ENCODE measurements at regions of chr2 and their contacts with region 1.

Region 1: GRCh38 chr2:54915101-54915500 is 135.2 kb downstream of the RTN4 start:
- DNase-seq: no peak
- ATAC-seq: no peak
- H3K4me3 ChIP-seq: no peak overlapping the region
- H3K27ac ChIP-seq: no peak overlapping the region
- H3K4me1 ChIP-seq: no peaks in the 10 kb centered on the region
- H3K27me3 ChIP-seq: peaks cover 0 to 2% (median 0%) of the 10 kb centered on the region in 9 donors
- CTCF ChIP-seq: no peak
- POLR2A ChIP-seq: no peak

Region 2: DNA sequence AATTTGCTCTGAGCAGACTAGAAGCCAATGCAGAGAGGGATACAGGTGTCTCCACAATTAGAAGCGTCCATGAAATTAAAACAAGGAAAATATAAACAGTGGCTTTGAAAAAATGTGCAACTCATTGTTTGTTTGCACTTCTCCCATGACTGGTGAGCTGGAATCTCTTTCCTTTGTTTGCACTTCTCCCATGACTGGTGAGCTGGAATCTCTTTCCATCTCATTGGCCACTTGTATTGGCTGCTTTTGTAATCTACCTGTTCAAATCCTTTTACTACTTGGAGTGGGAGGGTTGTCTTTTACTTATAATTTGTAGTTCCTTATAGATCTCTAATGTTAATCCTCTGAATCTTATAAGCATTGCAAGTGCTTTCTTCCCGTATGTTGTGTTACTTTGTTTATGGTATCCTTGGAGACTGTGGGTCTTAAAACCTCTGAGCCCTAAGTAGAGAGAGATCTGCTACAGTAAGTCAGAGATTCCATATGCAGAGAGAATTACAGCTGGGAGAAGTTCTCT is 41.1 kb after region 1 on chr2:
- intact Hi-C with region 1: loop called in 1 of 10 experiments (anchors 5 kb)
- DNase-seq: no peak
- ATAC-seq: no peak
- H3K4me3 ChIP-seq: no peak overlapping the region
- H3K27ac ChIP-seq: no peak overlapping the region
- H3K4me1 ChIP-seq: no peaks in the 10 kb centered on the region
- H3K27me3 ChIP-seq: peaks cover 0 to 6% (median 0%) of the 10 kb centered on the region in 9 donors
- CTCF ChIP-seq: no peak
- POLR2A ChIP-seq: no peak